ENCODE measurements at regions of chr3 and their contacts with region 1.

Region 1: DNA sequence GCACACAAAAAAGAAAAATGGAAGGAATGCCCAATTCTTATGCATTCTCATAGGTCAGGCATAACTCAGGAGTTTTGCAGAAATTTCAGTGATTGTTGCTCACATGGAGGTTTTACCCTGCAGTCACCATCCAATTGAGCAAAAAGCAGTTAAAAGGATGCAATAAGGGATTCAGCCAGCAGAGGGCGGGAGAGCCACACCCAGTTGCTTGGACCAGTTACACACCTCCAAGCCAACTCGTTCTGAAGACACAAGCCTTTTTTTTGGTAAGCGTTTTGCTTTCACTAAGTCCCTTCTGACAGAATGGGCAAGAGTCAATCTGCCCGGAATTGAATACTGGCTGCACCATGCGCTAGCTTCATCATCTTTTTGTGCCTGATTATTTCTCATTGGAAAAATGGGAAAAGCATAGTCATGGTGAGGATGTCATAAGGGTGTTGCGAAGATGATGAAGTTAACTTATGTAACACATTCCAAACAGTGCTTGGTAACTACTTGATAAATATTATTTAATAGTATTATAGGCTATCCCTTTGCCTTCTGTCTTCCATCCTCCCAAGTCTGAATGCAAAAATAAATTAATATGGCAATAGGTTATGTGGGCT is 154.4 kb upstream of the SGO1 start:
- DNase-seq: peak; percentile 70 to 88 (median 77)
- ATAC-seq: peak; percentile 91
- H3K4me3 ChIP-seq: no peak overlapping the region
- H3K27ac ChIP-seq: no peak overlapping the region
- H3K4me1 ChIP-seq: peaks cover 0 to 9% of the 10 kb centered on the region in 2 experiments; a peak in 1 of 5 replicates
- H3K27me3 ChIP-seq: no peaks in the 10 kb centered on the region
- CTCF ChIP-seq: peak; percentile 83 to 97 (median 95)
- EP300 ChIP-seq: 0 out of 2 replicates have a peak, but pooled peaks have one; percentile 10
- POLR2A ChIP-seq: no peak
- RAD21 ChIP-seq: peak; percentile 92 to 95

Region 2: GRCh38 chr3:19792388-19792787 is 548.0 kb before region 1 on chr3:
- CTCF ChIA-PET with region 1: no interaction called
- POLR2A ChIA-PET with region 1: no interaction called
- in situ Hi-C with region 1: no loop called
- intact Hi-C with region 1: no loop called
- DNase-seq: no peak
- ATAC-seq: no peak
- H3K4me3 ChIP-seq: no peak overlapping the region
- H3K27ac ChIP-seq: no peak overlapping the region
- H3K4me1 ChIP-seq: no peaks in the 10 kb centered on the region
- H3K27me3 ChIP-seq: no peaks in the 10 kb centered on the region
- CTCF ChIP-seq: no peak
- EP300 ChIP-seq: no peak
- POLR2A ChIP-seq: no peak
- RAD21 ChIP-seq: no peak

Region 3: GRCh38 chr3:20352546-20353179 is 12.2 kb after region 1 on chr3:
- CTCF ChIA-PET with region 1: no interaction called
- POLR2A ChIA-PET with region 1: no interaction called
- in situ Hi-C with region 1: no loop called
- intact Hi-C with region 1: no loop called
- DNase-seq: peak in 2 of 4 experiments; percentile 55 to 78
- ATAC-seq: peak; percentile 93
- H3K4me3 ChIP-seq: no peak overlapping the region
- H3K27ac ChIP-seq: peak overlapping the region; percentile 29; the same call in 1 of the 3 replicates
- H3K4me1 ChIP-seq: peaks cover 0 to 2% of the 10 kb centered on the region in 2 experiments; a peak in 2 of 5 replicates
- H3K27me3 ChIP-seq: no peaks in the 10 kb centered on the region
- CTCF ChIP-seq: no peak
- EP300 ChIP-seq: peak; percentile 67; the same call in 1 of the 2 replicates
- POLR2A ChIP-seq: no peak
- RAD21 ChIP-seq: no peak

Region 4: GRCh38 chr3:20462723-20463122 is 122.3 kb after region 1 on chr3:
- CTCF ChIA-PET with region 1: no interaction called
- POLR2A ChIA-PET with region 1: no interaction called
- in situ Hi-C with region 1: no loop called
- intact Hi-C with region 1: loop called (anchors 5 kb)
- DNase-seq: no peak
- ATAC-seq: no peak
- H3K4me3 ChIP-seq: no peak overlapping the region
- H3K27ac ChIP-seq: no peak overlapping the region
- H3K4me1 ChIP-seq: no peaks in the 10 kb centered on the region
- H3K27me3 ChIP-seq: no peaks in the 10 kb centered on the region
- CTCF ChIP-seq: no peak
- EP300 ChIP-seq: no peak
- POLR2A ChIP-seq: no peak
- RAD21 ChIP-seq: no peak

Region 5: DNA sequence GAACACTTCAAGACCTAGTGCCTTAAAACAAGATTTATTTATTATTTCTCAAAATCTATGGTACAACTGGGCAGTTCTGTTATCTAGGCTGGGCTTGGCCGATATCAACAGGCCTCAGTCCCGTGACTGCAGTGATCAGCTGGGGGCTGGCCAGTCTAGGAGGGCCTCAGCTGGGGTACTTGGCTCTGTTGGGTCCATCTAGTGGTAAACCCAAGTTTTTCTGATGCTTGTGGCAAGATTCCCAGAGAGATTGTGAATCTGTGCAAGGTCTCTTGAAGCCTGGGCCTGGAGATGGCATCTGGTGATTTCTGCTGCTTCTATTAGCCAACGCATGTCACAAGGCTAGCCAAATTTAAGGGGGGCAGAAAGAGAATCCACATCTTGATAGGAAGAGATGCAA is 328.0 kb after region 1 on chr3:
- CTCF ChIA-PET with region 1: no interaction called
- POLR2A ChIA-PET with region 1: no interaction called
- in situ Hi-C with region 1: no loop called
- intact Hi-C with region 1: loop called (anchors 10 kb)
- DNase-seq: peak in 2 of 4 experiments; percentile 7 to 38
- ATAC-seq: peak; percentile 62
- H3K4me3 ChIP-seq: no peak overlapping the region
- H3K27ac ChIP-seq: no peak overlapping the region
- H3K4me1 ChIP-seq: no peaks in the 10 kb centered on the region
- H3K27me3 ChIP-seq: no peaks in the 10 kb centered on the region
- CTCF ChIP-seq: peak in 1 of 3 experiments; percentile 11; a peak in 1 of 6 replicates
- EP300 ChIP-seq: no peak
- POLR2A ChIP-seq: no peak
- RAD21 ChIP-seq: no peak; a peak in 1 of 4 replicates

Region 6: GRCh38 chr3:20930034-20930433 is 589.6 kb after region 1 on chr3:
- CTCF ChIA-PET with region 1: no interaction called
- POLR2A ChIA-PET with region 1: no interaction called
- in situ Hi-C with region 1: no loop called
- intact Hi-C with region 1: loop called (anchors 2 kb)
- DNase-seq: peak; percentile 14 to 41 (median 26)
- ATAC-seq: peak; percentile 83
- H3K4me3 ChIP-seq: no peak overlapping the region
- H3K27ac ChIP-seq: no peak overlapping the region
- H3K4me1 ChIP-seq: no peaks in the 10 kb centered on the region
- H3K27me3 ChIP-seq: no peaks in the 10 kb centered on the region
- CTCF ChIP-seq: peak; percentile 34 to 60 (median 55); a peak in 4 of 6 replicates
- EP300 ChIP-seq: no peak
- POLR2A ChIP-seq: no peak
- RAD21 ChIP-seq: peak; percentile 52 to 76

Region 7: GRCh38 chr3:21484057-21484827 is 1143.8 kb after region 1 on chr3:
- CTCF ChIA-PET with region 1: no interaction called
- POLR2A ChIA-PET with region 1: no interaction called
- in situ Hi-C with region 1: no loop called
- intact Hi-C with region 1: loop called (anchors 1 kb)
- DNase-seq: peak; percentile 21 to 72 (median 24)
- ATAC-seq: peak; percentile 87
- H3K4me3 ChIP-seq: no peak overlapping the region
- H3K27ac ChIP-seq: no peak overlapping the region
- H3K4me1 ChIP-seq: no peaks in the 10 kb centered on the region; a peak in 1 of 5 replicates
- H3K27me3 ChIP-seq: no peaks in the 10 kb centered on the region
- CTCF ChIP-seq: peak; percentile 59 to 67 (median 65)
- EP300 ChIP-seq: no peak
- POLR2A ChIP-seq: no peak
- RAD21 ChIP-seq: peak; percentile 64 to 82

Region 8: DNA sequence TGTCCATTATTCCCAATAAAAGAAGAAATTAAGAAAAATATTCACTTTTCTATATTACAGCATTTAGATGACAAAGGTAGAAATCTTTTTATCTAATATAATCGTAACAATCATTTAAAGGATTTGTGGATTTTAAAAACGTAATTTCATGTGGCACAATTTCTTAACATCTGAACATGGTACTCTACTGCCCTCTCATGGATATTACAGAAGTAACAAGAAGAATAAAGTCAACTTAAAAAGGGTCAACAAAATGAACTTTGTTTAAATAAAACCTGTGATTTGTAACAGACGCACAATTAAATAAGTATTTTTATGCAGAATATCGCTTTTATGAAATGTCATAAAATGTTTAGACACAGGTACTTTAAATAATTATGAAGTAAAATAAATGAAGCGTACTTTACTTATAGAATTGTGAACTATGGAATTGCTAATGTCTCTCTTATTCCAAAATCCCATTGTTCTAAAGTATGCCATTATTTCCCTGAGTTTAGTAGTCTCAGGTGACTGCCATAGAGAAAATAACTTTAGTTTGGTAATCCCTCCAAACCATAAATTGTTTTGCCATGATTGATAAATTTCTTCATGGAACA is 1777.4 kb after region 1 on chr3:
- CTCF ChIA-PET with region 1: interaction called, 5 read pairs
- POLR2A ChIA-PET with region 1: no interaction called
- in situ Hi-C with region 1: no loop called
- intact Hi-C with region 1: loop called (anchors 5 kb)
- DNase-seq: peak; percentile 7 to 47 (median 12)
- ATAC-seq: no peak
- H3K4me3 ChIP-seq: no peak overlapping the region
- H3K27ac ChIP-seq: no peak overlapping the region
- H3K4me1 ChIP-seq: no peaks in the 10 kb centered on the region
- H3K27me3 ChIP-seq: no peaks in the 10 kb centered on the region
- CTCF ChIP-seq: peak; percentile 6 to 65 (median 26); a peak in 3 of 6 replicates
- EP300 ChIP-seq: no peak
- POLR2A ChIP-seq: no peak
- RAD21 ChIP-seq: peak; percentile 74 to 81

Measured in K562 (cell line).